Activated CD4-positive, alpha-beta T cell treated with anti-CD3 and anti-CD28 coated beads, Interleukin-2, amount 10 ng/mL, durations not matched to agents 7 days and 5 days (primary cell): ENCODE measurements at regions of chr1 and their contacts with region 1.

Region 1: DNA sequence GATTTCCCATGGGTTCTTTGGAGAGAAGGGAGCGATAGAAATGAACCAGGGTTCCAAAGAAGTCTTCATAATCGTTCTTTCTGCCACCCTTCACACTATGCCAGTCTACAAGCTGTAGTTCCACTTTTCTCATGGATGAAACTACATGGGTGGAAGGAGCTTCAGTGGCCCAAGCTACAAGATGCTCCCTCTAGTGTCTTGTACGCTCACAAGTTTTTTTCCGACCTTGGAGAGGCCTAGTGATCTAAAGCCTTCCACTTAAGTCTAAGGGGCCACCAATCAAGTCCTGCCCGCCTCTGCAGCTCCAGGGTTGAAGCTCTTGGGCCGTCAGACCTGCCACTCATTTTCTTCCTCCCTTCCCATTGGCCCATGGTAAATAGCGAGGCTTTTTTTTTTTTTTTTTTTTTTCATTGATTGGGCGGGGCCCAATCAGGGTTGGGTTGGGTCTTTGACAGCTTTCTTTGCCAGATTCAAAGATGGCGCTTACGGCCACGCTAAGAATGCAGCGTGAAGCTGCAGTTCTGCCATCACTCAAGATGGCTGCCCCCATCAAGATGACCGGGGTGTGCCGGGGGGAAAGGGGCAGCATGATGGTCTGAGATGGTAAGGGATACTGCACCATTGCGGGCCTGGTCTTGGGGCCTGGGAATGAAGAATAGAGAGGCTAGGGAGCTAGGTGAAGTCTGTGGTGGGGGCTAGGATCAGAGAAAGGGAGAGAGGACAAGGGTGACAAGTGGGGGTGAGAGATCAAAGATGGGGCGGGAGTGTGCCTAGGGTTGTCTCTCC is at the start of gene TOMM40L:
- DNase-seq: peak; percentile 94
- H3K4me3 Mint-ChIP-seq: peak within 1 kb of the TSS; percentile 95
- H3K27ac Mint-ChIP-seq: peak within 1 kb of the TSS; percentile 93
- H3K4me1 Mint-ChIP-seq: peaks cover 44% of the 10 kb centered on the region
- H3K27me3 Mint-ChIP-seq: no peaks in the 10 kb centered on the region
- total RNA-seq, gene TOMM40L: 16.7 to 17.3 TPM

Region 2: GRCh38 chr1:161192476-161193465 is 33.0 kb before region 1 on chr1:
- CTCF ChIA-PET with region 1: interaction called, 18 read pairs
- POLR2A ChIA-PET with region 1: no interaction called
- DNase-seq: peak; percentile 81
- H3K4me3 Mint-ChIP-seq: no peak overlapping the region
- H3K27ac Mint-ChIP-seq: peak overlapping the region; percentile 87
- H3K4me1 Mint-ChIP-seq: peaks cover 46% of the 10 kb centered on the region
- H3K27me3 Mint-ChIP-seq: no peaks in the 10 kb centered on the region

Region 3: DNA sequence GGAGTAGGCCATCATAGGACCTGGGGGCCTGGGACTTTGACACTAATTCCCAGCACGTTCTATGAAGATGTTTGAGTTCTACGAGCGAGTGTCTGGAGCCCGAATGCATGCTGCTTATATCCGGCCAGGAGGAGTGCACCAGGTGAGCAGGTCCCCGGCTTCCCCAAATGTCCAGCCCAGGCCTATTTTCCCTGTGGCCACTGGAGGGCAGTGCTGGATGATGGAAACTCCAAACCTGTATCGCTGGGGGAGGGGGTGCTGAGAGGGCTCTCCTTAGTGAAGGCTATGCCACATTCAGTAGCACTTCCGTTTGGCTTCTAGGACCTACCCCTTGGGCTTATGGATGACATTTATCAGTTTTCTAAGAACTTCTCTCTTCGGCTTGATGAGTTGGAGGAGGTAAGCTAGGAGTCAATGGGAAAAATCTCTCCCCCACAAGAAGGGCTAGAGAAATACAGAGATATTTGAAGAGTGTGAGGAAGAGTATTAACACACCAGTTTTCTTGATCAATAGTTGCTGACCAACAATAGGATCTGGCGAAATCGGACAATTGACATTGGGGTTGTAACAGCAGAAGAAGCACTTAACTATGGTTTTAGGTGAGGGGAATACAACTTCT is 15.8 kb before region 1 on chr1:
- CTCF ChIA-PET with region 1: interaction called, 20 read pairs
- POLR2A ChIA-PET with region 1: no interaction called
- DNase-seq: peak; percentile 79
- H3K4me3 Mint-ChIP-seq: no peak overlapping the region
- H3K27ac Mint-ChIP-seq: no peak overlapping the region
- H3K4me1 Mint-ChIP-seq: peaks cover 48% of the 10 kb centered on the region
- H3K27me3 Mint-ChIP-seq: no peaks in the 10 kb centered on the region

Region 4: GRCh38 chr1:161244888-161245287 is 19.2 kb after region 1 on chr1:
- CTCF ChIA-PET with region 1: interaction called, 21 read pairs
- POLR2A ChIA-PET with region 1: no interaction called
- DNase-seq: no peak
- H3K4me3 Mint-ChIP-seq: no peak overlapping the region
- H3K27ac Mint-ChIP-seq: no peak overlapping the region
- H3K4me1 Mint-ChIP-seq: no peaks in the 10 kb centered on the region
- H3K27me3 Mint-ChIP-seq: peaks cover 23% of the 10 kb centered on the region

Region 5: DNA sequence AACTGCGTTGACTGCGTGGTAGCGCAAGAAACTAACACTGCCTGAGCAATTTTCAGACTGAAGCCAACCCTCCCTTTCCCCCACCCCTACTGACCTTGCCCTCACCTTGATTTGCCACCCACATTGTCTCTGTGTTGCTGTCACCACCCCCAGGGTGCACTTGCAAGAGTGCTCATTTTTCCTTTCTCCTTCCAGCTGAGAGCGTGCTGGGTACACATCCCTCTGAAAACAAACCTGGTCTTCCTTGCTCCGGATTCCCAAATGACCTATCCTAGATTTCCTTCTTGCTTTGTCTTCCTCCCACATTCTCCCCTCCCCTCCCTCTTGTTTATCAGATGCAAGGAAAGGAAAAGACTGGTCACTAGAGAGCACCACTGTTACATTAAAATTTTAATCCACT is 59.8 kb after region 1 on chr1:
- CTCF ChIA-PET with region 1: no interaction called
- POLR2A ChIA-PET with region 1: no interaction called
- DNase-seq: no peak
- H3K4me3 Mint-ChIP-seq: no peak overlapping the region
- H3K27ac Mint-ChIP-seq: peak overlapping the region; percentile 60
- H3K4me1 Mint-ChIP-seq: no peaks in the 10 kb centered on the region
- H3K27me3 Mint-ChIP-seq: peaks cover 11% of the 10 kb centered on the region

Region 6: GRCh38 chr1:161382214-161383019 is 156.7 kb after region 1 on chr1:
- CTCF ChIA-PET with region 1: interaction called, 38 read pairs
- POLR2A ChIA-PET with region 1: no interaction called
- DNase-seq: no peak
- H3K4me3 Mint-ChIP-seq: no peak overlapping the region
- H3K27ac Mint-ChIP-seq: no peak overlapping the region
- H3K4me1 Mint-ChIP-seq: peaks cover 27% of the 10 kb centered on the region
- H3K27me3 Mint-ChIP-seq: no peaks in the 10 kb centered on the region